ENCODE measurements at regions of chr22 and their contacts with region 1.

Region 1: DNA sequence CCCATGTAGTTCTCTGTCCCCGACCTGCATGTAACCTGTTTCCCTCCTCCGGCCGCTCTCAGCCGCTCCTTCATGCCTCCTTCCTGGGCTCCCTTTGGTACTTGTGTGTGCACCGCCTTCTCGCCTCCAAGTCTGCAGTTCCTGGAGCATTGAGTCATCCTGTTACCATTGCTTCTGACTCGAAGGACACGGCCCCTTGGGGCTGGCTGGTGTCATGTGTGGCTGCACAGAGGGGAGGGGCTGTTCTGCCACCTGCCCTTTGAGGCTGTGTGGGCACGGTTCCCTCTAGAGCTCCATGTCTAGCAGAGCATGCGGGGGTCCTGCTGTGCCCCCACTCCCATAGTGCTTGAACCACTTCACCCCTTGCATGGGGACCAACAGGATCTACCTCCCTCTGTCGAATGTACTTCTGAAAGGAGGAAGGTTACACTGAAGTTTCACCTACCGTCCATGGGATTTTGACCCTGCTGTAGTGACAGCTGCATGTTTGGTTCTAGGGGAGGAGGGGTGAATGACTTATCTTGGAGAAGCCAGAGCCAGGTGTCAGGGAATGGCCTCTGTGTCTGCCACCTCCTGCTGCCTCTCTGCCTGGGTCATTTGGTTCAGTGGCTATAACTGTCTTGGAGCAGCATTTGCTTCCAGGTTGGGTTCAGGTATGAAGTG is 39.6 kb downstream of the BCR start:
- DNase-seq: peak; percentile 73
- H3K4me3 ChIP-seq: no peak overlapping the region
- H3K27ac ChIP-seq: peak overlapping the region; percentile 84
- H3K4me1 ChIP-seq: peaks cover 92% of the 10 kb centered on the region
- H3K27me3 ChIP-seq: no peaks in the 10 kb centered on the region
- CTCF ChIP-seq: no peak
- POLR2A ChIP-seq: no peak

Region 2: DNA sequence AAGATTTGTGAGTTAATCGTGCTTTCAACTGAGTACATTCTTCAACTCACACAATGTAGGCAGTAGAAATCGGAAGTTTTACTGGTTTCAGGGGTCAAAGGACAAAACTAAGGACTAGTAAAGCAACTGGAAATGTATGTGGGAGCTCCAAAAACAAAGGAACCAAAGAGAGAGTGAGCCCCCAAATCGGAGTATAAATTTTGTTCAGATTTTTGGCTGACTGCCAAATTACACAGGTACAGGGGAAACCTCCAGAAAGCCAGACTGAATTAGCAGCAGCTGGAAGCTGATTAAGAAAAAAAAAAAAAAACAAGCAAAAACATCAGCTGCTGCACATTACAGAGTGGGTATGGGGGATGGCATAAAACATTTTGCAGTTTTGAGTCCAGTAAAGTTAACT is 224.8 kb before region 1 on chr22:
- CTCF ChIA-PET with region 1: no interaction called
- POLR2A ChIA-PET with region 1: no interaction called
- dilution Hi-C with region 1: no loop called
- intact Hi-C with region 1: no loop called
- DNase-seq: no peak
- H3K4me3 ChIP-seq: no peak overlapping the region
- H3K27ac ChIP-seq: no peak overlapping the region
- H3K4me1 ChIP-seq: no peaks in the 10 kb centered on the region
- H3K27me3 ChIP-seq: no peaks in the 10 kb centered on the region
- CTCF ChIP-seq: no peak
- POLR2A ChIP-seq: no peak

Region 3: GRCh38 chr22:23199159-23199558 is 20.8 kb before region 1 on chr22:
- CTCF ChIA-PET with region 1: no interaction called
- POLR2A ChIA-PET with region 1: no interaction called
- dilution Hi-C with region 1: no loop called
- intact Hi-C with region 1: loop called (anchors 1 kb)
- DNase-seq: peak; percentile 77
- H3K4me3 ChIP-seq: no peak overlapping the region
- H3K27ac ChIP-seq: peak overlapping the region; percentile 61
- H3K4me1 ChIP-seq: peaks cover 28% of the 10 kb centered on the region
- H3K27me3 ChIP-seq: no peaks in the 10 kb centered on the region
- CTCF ChIP-seq: no peak
- POLR2A ChIP-seq: no peak

Region 4: GRCh38 chr22:23240639-23241389 is 20.9 kb after region 1 on chr22:
- CTCF ChIA-PET with region 1: interaction called, 9 read pairs
- POLR2A ChIA-PET with region 1: interaction called, 3 read pairs
- dilution Hi-C with region 1: no loop called
- intact Hi-C with region 1: loop called (anchors 1 kb)
- DNase-seq: peak; percentile 93
- H3K4me3 ChIP-seq: no peak overlapping the region
- H3K27ac ChIP-seq: peak overlapping the region; percentile 70
- H3K4me1 ChIP-seq: peaks cover 28% of the 10 kb centered on the region
- H3K27me3 ChIP-seq: no peaks in the 10 kb centered on the region
- CTCF ChIP-seq: peak; percentile 75 to 77
- POLR2A ChIP-seq: no peak

Region 5: GRCh38 chr22:23305922-23306374 is 86.0 kb after region 1 on chr22:
- CTCF ChIA-PET with region 1: interaction called, 3 read pairs
- POLR2A ChIA-PET with region 1: no interaction called
- dilution Hi-C with region 1: no loop called
- intact Hi-C with region 1: loop called (anchors 1 kb)
- DNase-seq: peak; percentile 96
- H3K4me3 ChIP-seq: peak overlapping the region in 1 of 3 experiments; percentile 1
- H3K27ac ChIP-seq: peak overlapping the region; percentile 96
- H3K4me1 ChIP-seq: peaks cover 69% of the 10 kb centered on the region
- H3K27me3 ChIP-seq: no peaks in the 10 kb centered on the region
- CTCF ChIP-seq: no peak
- POLR2A ChIP-seq: no peak

Region 6: DNA sequence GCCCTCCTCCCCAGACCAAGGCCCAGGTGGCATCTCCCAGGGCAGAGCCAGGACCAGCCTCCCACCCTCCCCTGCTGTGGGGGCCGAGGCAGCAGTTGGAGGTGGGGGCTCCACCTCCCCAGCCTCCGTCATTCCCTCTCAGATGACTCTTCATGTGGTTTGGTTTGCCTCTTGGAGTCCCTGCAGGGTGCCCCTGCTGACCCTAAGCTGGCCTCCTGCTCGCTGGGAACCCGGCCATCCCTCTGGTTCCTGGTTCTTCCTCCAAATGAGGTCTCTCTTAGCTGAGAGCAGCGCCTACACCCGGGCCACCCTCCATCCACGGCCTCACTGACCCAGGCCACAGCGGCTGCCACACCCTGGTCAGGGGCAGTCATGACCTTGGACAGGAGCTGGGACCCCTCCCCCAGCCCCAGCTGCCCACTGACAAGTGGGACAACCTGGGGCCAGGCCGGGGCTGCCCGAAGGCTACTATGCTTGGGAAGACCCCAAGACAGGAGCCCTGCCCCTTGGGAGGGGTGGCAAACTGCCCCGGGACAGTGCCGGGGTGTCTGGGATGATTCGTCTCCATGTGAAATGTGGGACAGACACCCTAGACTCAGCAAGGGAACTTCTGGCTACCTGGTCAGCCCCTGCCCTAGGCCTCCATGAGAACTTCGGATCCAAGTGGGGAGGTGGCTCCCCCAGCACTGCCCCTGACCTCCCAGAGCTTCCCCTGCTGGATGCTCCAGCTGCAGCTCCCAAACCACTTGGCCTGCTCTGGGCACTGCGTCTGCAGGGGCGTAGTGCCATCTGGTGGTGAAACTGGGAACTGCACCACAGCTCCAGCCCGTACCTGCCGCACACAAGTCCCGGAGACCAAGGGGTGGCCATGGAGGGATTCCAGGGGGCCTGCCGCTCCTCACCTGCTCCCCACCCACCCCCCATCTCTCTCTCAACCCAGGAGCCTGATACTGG is 165.6 kb after region 1 on chr22:
- CTCF ChIA-PET with region 1: no interaction called
- POLR2A ChIA-PET with region 1: no interaction called
- dilution Hi-C with region 1: no loop called
- intact Hi-C with region 1: no loop called
- DNase-seq: peak; percentile 84
- H3K4me3 ChIP-seq: no peak overlapping the region
- H3K27ac ChIP-seq: no peak overlapping the region
- H3K4me1 ChIP-seq: no peaks in the 10 kb centered on the region
- H3K27me3 ChIP-seq: no peaks in the 10 kb centered on the region
- CTCF ChIP-seq: peak; percentile 90 to 98
- POLR2A ChIP-seq: no peak

Region 7: DNA sequence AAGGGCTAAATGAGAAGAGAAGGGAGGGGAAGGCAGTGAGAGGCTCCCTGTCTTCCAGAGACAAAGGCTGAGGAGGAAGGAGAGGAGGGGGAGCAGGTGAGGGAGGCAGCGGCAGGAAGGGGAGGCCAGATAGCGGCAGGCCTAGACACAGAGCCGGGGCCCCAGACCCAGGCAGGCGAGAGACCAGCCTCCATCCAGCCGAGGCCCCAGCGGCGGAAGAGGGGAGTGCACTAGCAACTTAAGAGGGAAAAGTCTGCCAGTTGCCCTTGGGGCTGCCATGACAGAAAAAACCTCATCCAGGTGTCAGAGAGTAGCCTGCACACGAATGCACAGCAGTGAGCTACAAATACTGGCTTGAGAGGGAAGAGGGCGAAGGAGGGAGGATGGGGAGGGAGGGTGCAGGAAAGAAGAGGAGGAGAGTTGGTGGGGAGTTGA is 313.4 kb after region 1 on chr22:
- CTCF ChIA-PET with region 1: no interaction called
- POLR2A ChIA-PET with region 1: no interaction called
- dilution Hi-C with region 1: no loop called
- intact Hi-C with region 1: no loop called
- DNase-seq: peak; percentile 24
- H3K4me3 ChIP-seq: no peak overlapping the region
- H3K27ac ChIP-seq: no peak overlapping the region
- H3K4me1 ChIP-seq: peaks cover 5% of the 10 kb centered on the region
- H3K27me3 ChIP-seq: no peaks in the 10 kb centered on the region
- CTCF ChIP-seq: peak; percentile 32 to 60
- POLR2A ChIP-seq: no peak

Measured in endothelial cell of umbilical vein (primary cell).